Pancreas (tissue), 10 donors: ENCODE measurements at regions of chr21 and their contacts with region 1.

Region 1: DNA sequence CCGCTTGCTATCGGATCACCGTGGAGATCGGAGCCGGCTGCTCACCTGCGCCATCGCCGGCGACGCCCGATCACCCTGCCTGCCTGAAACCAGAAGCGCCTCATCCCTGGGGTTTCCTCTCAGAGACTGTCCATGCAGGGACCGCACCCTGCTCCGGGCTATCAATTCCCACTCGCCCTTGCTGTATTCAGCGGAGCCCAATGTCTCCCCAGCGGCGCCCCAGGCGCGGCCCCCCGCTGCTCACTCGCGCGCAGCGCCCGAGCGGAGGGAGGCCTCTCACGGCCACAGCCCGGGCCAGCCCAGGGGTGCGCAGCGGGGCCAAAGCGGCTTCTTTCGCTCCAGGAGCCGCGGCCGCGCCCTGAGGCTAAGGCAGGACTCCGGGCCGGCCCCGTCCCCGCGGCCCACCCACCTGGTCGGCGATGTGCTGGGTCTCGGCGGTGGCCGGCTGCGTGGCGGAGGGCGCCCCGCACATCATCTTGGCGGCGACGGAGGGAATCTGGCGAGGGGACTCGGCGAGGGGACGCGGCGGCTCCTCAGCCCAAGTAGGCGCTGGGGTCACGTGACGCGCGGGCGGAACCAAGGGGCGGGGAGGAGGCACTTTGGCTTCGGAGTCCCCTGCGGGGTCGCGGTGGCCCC is at the start of gene CSTB:
- DNase-seq: peak; percentile 69 to 92 (median 82)
- ATAC-seq: peak; percentile 82 to 87 (median 84)
- H3K4me3 ChIP-seq: peak within 1 kb of the TSS; percentile 73 to 89 (median 88)
- H3K27ac ChIP-seq: peak within 1 kb of the TSS; percentile 68 to 90 (median 80)
- H3K4me1 ChIP-seq: peaks cover 0 to 8% (median 0%) of the 10 kb centered on the region in 3 donors
- H3K27me3 ChIP-seq: no peaks in the 10 kb centered on the region
- CTCF ChIP-seq: no peak
- total RNA-seq, gene CSTB: 7.4 to 21.3 (median 11.4) TPM

Region 2: GRCh38 chr21:43728467-43729390 is 47.2 kb before region 1 on chr21:
- intact Hi-C with region 1: loop called in 1 of 3 experiments (anchors 10 kb)
- DNase-seq: peak; percentile 81 to 91 (median 86)
- ATAC-seq: peak; percentile 51 to 79 (median 63)
- H3K4me3 ChIP-seq: peak overlapping the region in 3 of 4 donors; percentile 14 to 27 (median 23)
- H3K27ac ChIP-seq: peak overlapping the region; percentile 57 to 84 (median 80)
- H3K4me1 ChIP-seq: peaks cover 33 to 51% (median 38%) of the 10 kb centered on the region in 3 donors
- H3K27me3 ChIP-seq: no peaks in the 10 kb centered on the region
- CTCF ChIP-seq: no peak